ENCODE measurements at regions of chr14 and their contacts with region 1.

Region 1: GRCh38 chr14:91323671-91324605 is 79.4 kb upstream of the GPR68 start:
- DNase-seq: peak; percentile 98
- ATAC-seq: peak; percentile 85
- H3K4me3 Mint-ChIP-seq: peak overlapping the region; percentile 74
- H3K27ac Mint-ChIP-seq: peak overlapping the region; percentile 100
- H3K4me1 Mint-ChIP-seq: peaks cover 83% of the 10 kb centered on the region
- H3K27me3 Mint-ChIP-seq: no peaks in the 10 kb centered on the region

Region 2: GRCh38 chr14:91341751-91342154 is 17.8 kb after region 1 on chr14:
- CTCF ChIA-PET with region 1: interaction called, 10 read pairs
- POLR2A ChIA-PET with region 1: interaction called, 5 read pairs
- intact Hi-C with region 1: no loop called
- DNase-seq: no peak
- ATAC-seq: no peak
- H3K4me3 Mint-ChIP-seq: no peak overlapping the region
- H3K27ac Mint-ChIP-seq: no peak overlapping the region
- H3K4me1 Mint-ChIP-seq: peaks cover 17% of the 10 kb centered on the region
- H3K27me3 Mint-ChIP-seq: no peaks in the 10 kb centered on the region

Region 3: DNA sequence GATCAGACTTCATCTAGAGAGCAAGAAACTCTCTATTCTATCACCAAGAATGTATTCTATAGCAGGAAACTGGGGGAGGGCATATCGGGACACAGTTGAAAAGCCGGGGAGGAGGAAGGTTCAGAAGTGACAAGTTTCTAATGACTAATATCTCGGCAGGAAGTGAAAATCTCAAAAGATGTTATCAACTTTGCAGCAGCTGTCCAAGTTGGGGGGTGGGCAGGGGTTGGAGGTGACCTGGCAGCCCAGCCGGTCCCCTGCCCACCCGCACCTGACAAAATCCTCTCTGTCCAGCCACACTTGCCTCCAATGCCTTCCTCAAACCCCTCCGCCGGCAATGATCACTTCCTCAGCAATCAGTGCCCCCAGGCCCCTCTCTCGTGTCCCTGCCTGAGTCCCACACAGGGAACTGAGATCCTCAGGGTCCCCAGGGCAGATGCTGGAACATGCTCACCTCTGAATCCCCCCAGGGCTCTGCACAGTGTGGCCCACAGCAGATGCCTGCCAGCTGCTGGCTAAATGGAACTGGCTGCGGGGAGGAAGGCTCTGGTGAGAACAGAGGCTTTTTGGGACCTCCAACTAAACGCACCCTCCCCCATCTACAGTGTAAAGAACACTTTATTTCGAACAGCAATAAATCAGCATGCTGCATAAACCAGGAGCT is 49.8 kb after region 1 on chr14:
- CTCF ChIA-PET with region 1: interaction called, 6 read pairs
- POLR2A ChIA-PET with region 1: no interaction called
- intact Hi-C with region 1: loop called (anchors 1 to 2 kb)
- DNase-seq: peak; percentile 81
- ATAC-seq: peak; percentile 71
- H3K4me3 Mint-ChIP-seq: peak overlapping the region; percentile 50
- H3K27ac Mint-ChIP-seq: peak overlapping the region; percentile 86
- H3K4me1 Mint-ChIP-seq: peaks cover 99% of the 10 kb centered on the region
- H3K27me3 Mint-ChIP-seq: no peaks in the 10 kb centered on the region

Region 4: GRCh38 chr14:91396959-91397815 is 73.2 kb after region 1 on chr14:
- CTCF ChIA-PET with region 1: interaction called, 10 read pairs
- POLR2A ChIA-PET with region 1: no interaction called
- intact Hi-C with region 1: no loop called
- DNase-seq: peak; percentile 83
- ATAC-seq: peak; percentile 85
- H3K4me3 Mint-ChIP-seq: peak overlapping the region; percentile 71
- H3K27ac Mint-ChIP-seq: peak overlapping the region; percentile 94
- H3K4me1 Mint-ChIP-seq: peaks cover 94% of the 10 kb centered on the region
- H3K27me3 Mint-ChIP-seq: no peaks in the 10 kb centered on the region

Region 5: DNA sequence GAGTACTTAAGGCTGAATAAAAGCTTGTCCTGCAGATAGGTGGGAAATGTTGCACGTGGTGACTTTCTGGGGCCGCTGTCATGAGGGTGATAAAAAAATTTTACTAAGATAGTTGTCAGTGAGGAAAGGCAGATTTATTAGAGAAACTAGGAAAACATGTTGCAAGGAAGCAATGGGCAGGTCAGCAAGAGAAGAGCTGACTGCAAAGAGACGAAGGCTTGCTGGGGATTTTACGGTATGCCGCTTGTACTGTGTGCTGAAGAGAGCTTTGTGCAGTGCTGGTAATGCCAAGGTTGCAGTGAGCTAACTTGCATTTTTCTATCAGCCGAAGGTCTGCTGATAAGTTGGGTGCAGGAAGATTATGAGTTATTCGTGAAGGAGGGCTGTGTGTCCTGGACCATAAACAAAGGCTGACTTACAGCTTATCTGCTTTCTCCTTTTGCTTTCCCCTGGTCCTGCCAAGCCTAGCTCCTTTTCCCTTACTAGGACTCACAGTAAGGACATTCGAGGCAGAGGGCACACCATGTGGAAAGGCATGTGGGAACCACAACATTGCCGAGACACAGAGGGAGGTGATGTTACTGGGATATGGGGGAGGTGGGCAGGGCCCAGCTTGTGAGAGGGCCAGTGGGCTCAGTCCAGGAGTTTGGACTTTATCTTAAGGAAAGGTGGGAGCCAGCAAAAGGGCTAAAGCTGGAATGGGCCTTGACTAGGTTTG is 101.0 kb after region 1 on chr14:
- CTCF ChIA-PET with region 1: interaction called, 177 read pairs
- POLR2A ChIA-PET with region 1: no interaction called
- intact Hi-C with region 1: no loop called
- DNase-seq: no peak
- ATAC-seq: no peak
- H3K4me3 Mint-ChIP-seq: no peak overlapping the region
- H3K27ac Mint-ChIP-seq: no peak overlapping the region
- H3K4me1 Mint-ChIP-seq: peaks cover 11% of the 10 kb centered on the region
- H3K27me3 Mint-ChIP-seq: no peaks in the 10 kb centered on the region

Region 6: GRCh38 chr14:91573893-91574837 is 250.2 kb after region 1 on chr14:
- CTCF ChIA-PET with region 1: no interaction called
- POLR2A ChIA-PET with region 1: no interaction called
- intact Hi-C with region 1: loop called in 1 of 2 experiments (anchors 1 kb)
- DNase-seq: peak; percentile 96
- ATAC-seq: peak; percentile 91
- H3K4me3 Mint-ChIP-seq: peak overlapping the region; percentile 76
- H3K27ac Mint-ChIP-seq: peak overlapping the region; percentile 56
- H3K4me1 Mint-ChIP-seq: peaks cover 18% of the 10 kb centered on the region
- H3K27me3 Mint-ChIP-seq: peaks cover 10% of the 10 kb centered on the region

Region 7: GRCh38 chr14:91866061-91866460 is 542.1 kb after region 1 on chr14:
- CTCF ChIA-PET with region 1: interaction called, 3 read pairs
- POLR2A ChIA-PET with region 1: interaction called, 3 read pairs
- intact Hi-C with region 1: loop called in 1 of 2 experiments (anchors 10 kb)
- DNase-seq: peak; percentile 66
- ATAC-seq: peak; percentile 20
- H3K4me3 Mint-ChIP-seq: peak overlapping the region; percentile 84
- H3K27ac Mint-ChIP-seq: peak overlapping the region; percentile 97
- H3K4me1 Mint-ChIP-seq: peaks cover 91% of the 10 kb centered on the region
- H3K27me3 Mint-ChIP-seq: no peaks in the 10 kb centered on the region

Measured in activated CD4-positive, alpha-beta T cell treated with anti-CD3 and anti-CD28 coated beads for 36 hours (primary cell).